Posterior cingulate gyrus (tissue), 11 donors: ENCODE measurements at regions of chr9 and their contacts with region 1.

Region 1: GRCh38 chr9:98315551-98316060 is 60.2 kb upstream of the TBC1D2 start:
- DNase-seq: peak; percentile 42 to 96 (median 80)

Region 2: DNA sequence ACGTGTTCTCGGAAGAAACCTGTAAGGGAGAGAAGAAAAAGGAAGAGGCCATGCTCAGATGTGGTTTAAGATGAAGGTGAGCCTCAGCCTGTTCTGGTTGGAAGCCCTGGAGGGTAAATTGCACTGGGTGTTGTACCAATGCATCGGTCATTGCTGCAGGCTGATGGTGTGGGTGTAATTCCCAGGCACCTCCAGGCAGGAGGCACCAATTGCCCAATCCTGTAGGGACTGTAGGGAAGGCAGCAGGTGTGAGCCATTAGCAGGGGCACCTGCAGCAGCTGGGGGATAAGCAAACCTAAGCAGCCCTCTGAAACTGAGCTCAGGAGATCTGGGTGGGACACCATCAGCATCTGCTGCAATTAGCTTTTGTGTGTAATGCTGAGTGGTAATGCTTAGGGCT is 129.9 kb after region 1 on chr9:
- intact Hi-C with region 1: no loop called
- DNase-seq: no peak

Region 3: DNA sequence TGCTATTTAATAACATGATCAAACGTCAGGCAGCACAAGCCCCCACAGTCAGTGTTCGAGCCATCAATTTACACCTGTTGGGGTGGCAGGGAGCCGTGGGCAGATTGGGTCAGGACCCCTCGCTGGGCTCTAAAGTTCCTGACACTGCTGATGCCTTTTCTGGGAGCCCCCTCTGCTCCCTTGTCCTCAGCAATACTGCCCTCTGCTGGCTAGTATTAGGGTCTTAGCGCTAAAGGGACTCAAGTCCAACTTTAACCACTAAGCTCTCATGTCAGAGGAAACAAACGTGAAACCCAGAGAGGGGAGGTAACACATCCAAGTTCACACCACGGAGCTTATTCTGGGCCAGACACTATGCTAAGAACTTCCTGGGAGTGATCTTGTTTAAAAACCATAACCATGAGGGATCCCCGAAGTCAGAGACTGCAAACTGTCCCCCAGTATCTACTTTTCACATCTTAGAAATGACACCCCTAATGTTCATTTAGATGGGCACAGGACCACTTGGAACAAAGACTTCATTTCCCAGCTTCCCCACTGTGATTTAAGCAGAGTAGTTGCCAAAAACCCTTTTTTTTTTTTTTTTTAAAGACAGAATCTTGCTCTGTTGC is 460.3 kb after region 1 on chr9:
- intact Hi-C with region 1: loop called (anchors 1 kb)
- DNase-seq: peak in 1 of 10 donors; percentile 52

Region 4: GRCh38 chr9:98791147-98792095 is 475.8 kb after region 1 on chr9:
- intact Hi-C with region 1: loop called (anchors 5 kb)
- DNase-seq: peak; percentile 62 to 96 (median 82)

Region 5: DNA sequence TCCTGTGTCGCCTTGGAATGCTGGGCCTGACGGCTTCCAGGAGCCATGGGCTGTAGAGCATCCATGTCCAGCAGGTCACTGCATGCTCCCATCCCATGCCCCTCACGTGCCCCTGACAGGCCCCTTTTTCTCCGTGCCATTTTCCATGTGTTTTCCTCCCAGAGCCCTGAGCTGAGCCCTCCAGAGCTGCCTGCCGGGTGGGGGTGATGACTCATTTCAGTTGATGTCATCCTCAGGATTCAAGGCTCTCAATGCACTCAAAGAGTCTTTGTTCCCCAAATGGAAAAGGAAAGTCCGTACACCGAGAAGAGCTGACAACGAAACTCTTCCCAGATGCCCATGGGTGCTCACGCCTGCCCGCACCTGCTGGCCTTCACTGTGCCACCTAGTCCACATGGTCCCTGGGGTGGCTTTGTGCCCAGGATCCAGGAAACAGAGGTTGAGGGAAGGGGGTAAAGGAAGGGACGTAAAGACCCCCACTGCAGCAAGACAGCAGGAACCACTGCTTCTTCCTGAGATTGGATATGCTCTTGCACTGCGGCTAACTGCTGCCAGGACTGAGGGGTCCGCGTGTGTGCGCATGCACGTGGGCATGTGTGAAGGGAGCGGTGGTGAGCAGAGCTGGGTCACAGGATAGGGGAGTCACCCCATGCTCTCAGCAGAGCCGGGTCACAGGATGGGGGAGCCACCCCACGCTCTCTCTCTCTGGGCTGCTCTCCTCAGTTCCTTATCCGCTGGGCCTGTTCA is 655.7 kb after region 1 on chr9:
- intact Hi-C with region 1: no loop called
- DNase-seq: peak in 7 of 10 donors; percentile 24 to 88 (median 56)